Activated CD8-positive, alpha-beta T cell treated with anti-CD3 and anti-CD28 coated beads, Interleukin-2, amount 10 ng/mL, durations not matched to agents 7 days and 5 days (primary cell): ENCODE measurements at regions of chr22 and their contacts with region 1.

Region 1: GRCh38 chr22:40679964-40680818 is 907 bp downstream of the MCHR1 start:
- DNase-seq: no peak
- ATAC-seq: no peak
- H3K4me3 Mint-ChIP-seq: no peak overlapping the region
- H3K27ac Mint-ChIP-seq: no peak overlapping the region
- H3K4me1 Mint-ChIP-seq: peaks cover 29% of the 10 kb centered on the region
- H3K27me3 Mint-ChIP-seq: peaks cover 21% of the 10 kb centered on the region

Region 2: GRCh38 chr22:40694411-40694810 is 14.2 kb after region 1 on chr22:
- CTCF ChIA-PET with region 1: interaction called, 10 read pairs
- POLR2A ChIA-PET with region 1: no interaction called
- DNase-seq: no peak
- ATAC-seq: no peak
- H3K4me3 Mint-ChIP-seq: no peak overlapping the region
- H3K27ac Mint-ChIP-seq: no peak overlapping the region
- H3K4me1 Mint-ChIP-seq: no peaks in the 10 kb centered on the region
- H3K27me3 Mint-ChIP-seq: peaks cover 19% of the 10 kb centered on the region

Region 3: DNA sequence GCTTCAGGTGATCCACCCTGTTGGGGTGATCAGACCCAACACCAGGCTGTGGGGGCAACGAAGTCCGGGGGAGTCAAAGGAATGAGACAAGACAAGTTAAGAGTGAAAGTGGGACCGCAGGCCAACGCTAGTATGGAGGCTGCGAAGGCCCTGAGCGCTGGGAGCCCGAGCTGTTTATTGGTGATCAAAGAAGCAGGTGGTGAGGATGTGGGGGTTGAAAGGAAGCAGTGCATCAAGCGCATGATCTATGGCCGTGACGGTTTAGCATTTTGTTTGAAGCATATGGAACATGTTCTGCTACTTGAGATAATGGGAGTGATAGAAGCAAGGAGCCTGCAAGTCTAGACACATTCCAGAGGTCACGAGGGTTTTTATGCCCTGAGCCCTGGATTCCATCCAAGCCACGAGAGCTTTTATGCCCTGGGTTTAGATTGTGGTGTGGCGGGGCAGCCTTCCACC is 48.6 kb after region 1 on chr22:
- CTCF ChIA-PET with region 1: interaction called, 14 read pairs
- POLR2A ChIA-PET with region 1: interaction called, 8 read pairs
- DNase-seq: peak; percentile 83
- ATAC-seq: peak; percentile 56
- H3K4me3 Mint-ChIP-seq: peak overlapping the region; percentile 71
- H3K27ac Mint-ChIP-seq: peak overlapping the region; percentile 98
- H3K4me1 Mint-ChIP-seq: peaks cover 48% of the 10 kb centered on the region
- H3K27me3 Mint-ChIP-seq: no peaks in the 10 kb centered on the region

Region 4: GRCh38 chr22:40766956-40767355 is 86.8 kb after region 1 on chr22:
- CTCF ChIA-PET with region 1: interaction called, 158 read pairs
- POLR2A ChIA-PET with region 1: no interaction called
- DNase-seq: no peak
- ATAC-seq: no peak
- H3K4me3 Mint-ChIP-seq: no peak overlapping the region
- H3K27ac Mint-ChIP-seq: no peak overlapping the region
- H3K4me1 Mint-ChIP-seq: peaks cover 6% of the 10 kb centered on the region
- H3K27me3 Mint-ChIP-seq: no peaks in the 10 kb centered on the region

Region 5: DNA sequence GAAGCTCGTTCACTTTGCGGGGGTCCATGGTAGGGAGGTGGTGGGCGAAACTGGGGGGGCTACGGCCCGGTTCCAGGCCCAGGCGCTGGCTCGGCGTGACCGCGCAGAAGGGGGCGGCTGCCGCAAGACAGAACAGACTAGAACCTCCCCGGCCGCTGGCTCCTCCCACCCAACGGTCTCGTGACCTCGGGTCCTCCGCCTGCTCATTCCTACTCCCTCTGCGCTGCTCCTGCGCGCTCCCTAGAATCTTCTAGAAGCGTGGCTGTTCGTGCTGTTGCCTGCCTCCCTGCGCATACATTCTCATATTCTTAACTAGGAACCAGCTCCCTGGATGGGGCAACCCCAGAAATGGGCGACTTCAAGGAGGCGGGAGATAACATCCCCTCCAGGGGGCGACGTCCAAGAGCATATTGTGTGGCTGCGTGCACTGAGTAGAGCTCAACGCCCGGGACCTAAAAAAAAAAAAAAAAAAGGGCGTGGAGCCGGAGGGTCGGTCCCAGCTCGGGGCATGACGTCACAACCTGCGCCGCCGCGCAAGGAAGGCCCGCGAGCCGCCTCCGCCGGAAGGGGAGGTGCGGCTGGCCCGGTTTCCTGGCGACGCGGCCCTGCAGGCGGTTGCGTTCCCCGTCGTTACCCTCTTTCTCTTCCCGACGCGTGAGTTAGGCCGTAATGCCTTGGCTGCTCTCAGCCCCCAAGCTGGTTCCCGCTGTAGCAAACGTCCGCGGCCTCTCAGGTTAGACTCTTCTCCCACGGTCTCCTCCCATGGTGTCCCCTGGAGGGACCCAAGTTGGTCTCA is 176.5 kb after region 1 on chr22 and contains the starts of genes ST13 and XPNPEP3:
- CTCF ChIA-PET with region 1: interaction called, 13 read pairs
- POLR2A ChIA-PET with region 1: interaction called, 4 read pairs
- DNase-seq: peak; percentile 98
- ATAC-seq: peak; percentile 94
- H3K4me3 Mint-ChIP-seq: peak within 1 kb of the TSS; percentile 96
- H3K27ac Mint-ChIP-seq: peak within 1 kb of the TSS; percentile 100
- H3K4me1 Mint-ChIP-seq: peaks cover 48% of the 10 kb centered on the region
- H3K27me3 Mint-ChIP-seq: no peaks in the 10 kb centered on the region
- total RNA-seq, gene ST13: 141 to 148 TPM
- total RNA-seq, gene XPNPEP3: 14.6 TPM

Region 6: GRCh38 chr22:40922484-40923303 is 242.5 kb after region 1 on chr22:
- CTCF ChIA-PET with region 1: interaction called, 12 read pairs
- POLR2A ChIA-PET with region 1: no interaction called
- DNase-seq: peak; percentile 50
- ATAC-seq: peak; percentile 86
- H3K4me3 Mint-ChIP-seq: no peak overlapping the region
- H3K27ac Mint-ChIP-seq: peak overlapping the region; percentile 60
- H3K4me1 Mint-ChIP-seq: peaks cover 4% of the 10 kb centered on the region
- H3K27me3 Mint-ChIP-seq: no peaks in the 10 kb centered on the region